ENCODE measurements at regions of chr1 and their contacts with region 1.

Region 1: DNA sequence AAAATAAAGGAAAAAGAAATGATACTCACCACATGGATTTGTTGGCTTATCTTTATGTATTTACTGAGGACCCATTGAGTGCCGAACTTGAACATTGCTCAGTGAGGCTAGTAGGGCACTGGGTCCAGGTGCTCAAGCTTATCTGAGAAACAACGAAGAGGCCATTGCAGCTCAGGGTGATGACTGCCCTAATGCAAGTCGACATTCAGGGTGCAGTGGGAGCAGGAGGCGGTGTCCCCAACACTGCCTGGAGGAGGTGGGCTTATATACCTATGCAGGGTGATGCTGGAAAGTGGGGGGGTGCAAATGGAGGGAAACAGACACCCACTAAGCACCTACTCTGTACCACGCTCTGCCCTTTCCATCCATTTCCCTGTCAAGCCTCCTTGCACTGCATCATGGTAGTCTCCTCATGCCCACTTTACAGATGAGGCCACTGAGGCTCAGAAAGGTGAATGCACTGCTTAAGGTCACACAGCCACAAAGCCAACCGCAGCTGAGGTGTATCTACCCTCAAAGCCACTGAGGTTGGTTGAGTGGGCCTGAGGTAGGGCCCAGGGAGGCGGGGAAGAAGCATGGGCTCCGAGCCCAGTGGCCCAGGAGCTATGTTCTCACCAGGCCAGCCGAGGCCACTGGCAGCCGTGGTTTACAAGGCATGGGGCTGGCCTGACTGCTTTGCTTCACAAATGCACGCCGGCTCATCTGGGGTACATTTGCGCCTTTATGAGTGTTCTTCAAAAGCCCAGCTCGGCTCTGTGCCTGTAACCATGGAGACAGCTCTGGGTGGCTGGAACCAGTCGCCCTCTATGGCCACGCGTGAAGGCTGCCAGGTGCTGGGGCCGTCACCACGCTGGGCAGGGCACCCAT is 103.8 kb downstream of the EPHB2 start:
- DNase-seq: no peak
- ATAC-seq: peak in 1 of 8 donors; percentile 38
- H3K4me3 ChIP-seq: no peak overlapping the region
- H3K27ac ChIP-seq: no peak overlapping the region
- H3K4me1 ChIP-seq: peaks cover 0 to 9% (median 1%) of the 10 kb centered on the region in 9 donors
- H3K27me3 ChIP-seq: no peaks in the 10 kb centered on the region
- CTCF ChIP-seq: no peak

Region 2: GRCh38 chr1:22861764-22862440 is 47.5 kb after region 1 on chr1:
- intact Hi-C with region 1: loop called in 1 of 10 experiments (anchors 5 kb)
- DNase-seq: no peak
- ATAC-seq: peak; percentile 32 to 79 (median 64)
- H3K4me3 ChIP-seq: no peak overlapping the region
- H3K27ac ChIP-seq: no peak overlapping the region
- H3K4me1 ChIP-seq: peaks cover 0 to 6% (median 0%) of the 10 kb centered on the region in 9 donors
- H3K27me3 ChIP-seq: peaks cover 0 to 3% (median 0%) of the 10 kb centered on the region in 7 donors
- CTCF ChIP-seq: peak; percentile 38 to 81 (median 68)

Region 3: DNA sequence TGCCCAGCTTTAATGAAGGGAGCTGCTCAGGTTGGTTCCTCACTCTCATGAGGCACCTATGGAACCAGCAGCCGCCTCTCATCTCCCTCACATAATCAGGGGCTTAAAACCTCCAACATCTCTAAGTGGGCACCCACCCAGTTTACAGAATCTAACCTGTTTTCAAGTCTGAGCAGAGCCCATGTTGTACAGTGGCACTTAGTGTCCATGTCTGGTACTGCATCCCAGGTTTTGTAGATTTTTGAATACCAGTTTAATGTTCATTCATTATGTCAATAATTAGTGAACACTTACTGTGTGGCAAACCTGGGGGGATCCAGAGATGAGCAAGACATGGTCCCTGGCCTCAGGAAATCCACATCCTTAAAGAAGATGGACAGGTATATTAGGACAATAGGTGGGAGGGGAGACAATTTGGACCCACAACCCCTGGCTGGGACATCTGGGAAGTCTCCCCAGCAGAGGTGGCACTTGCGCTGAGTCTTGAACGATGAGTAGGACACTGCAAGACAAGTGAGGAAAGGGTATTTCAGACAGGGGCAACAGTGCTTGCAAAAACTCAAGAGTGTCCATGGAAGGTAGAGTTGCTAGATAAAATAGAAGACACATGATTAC is 74.9 kb after region 1 on chr1:
- intact Hi-C with region 1: loop called in 1 of 10 experiments (anchors 10 kb)
- DNase-seq: no peak
- ATAC-seq: peak in 4 of 8 donors; percentile 18 to 54 (median 33)
- H3K4me3 ChIP-seq: no peak overlapping the region
- H3K27ac ChIP-seq: no peak overlapping the region
- H3K4me1 ChIP-seq: peaks cover 0 to 8% (median 0%) of the 10 kb centered on the region in 9 donors
- H3K27me3 ChIP-seq: peaks cover 0 to 17% (median 0%) of the 10 kb centered on the region in 7 donors
- CTCF ChIP-seq: peak; percentile 53 to 80 (median 73)

Measured in heart right ventricle (tissue), 16 donors.